BJ (cell line): ENCODE measurements at regions of chr11 and their contacts with region 1.

Region 1: GRCh38 chr11:7278314-7278917 is 26.7 kb downstream of the SYT9 start:
- DNase-seq: no peak
- H3K4me3 ChIP-seq: no peak overlapping the region
- H3K27me3 ChIP-seq: peaks cover 2% of the 10 kb centered on the region; the same call in 1 of the 2 replicates
- CTCF ChIP-seq: peak; percentile 77

Region 2: GRCh38 chr11:6812390-6813005 is 465.9 kb before region 1 on chr11:
- CTCF ChIA-PET with region 1: interaction called, 14 read pairs
- POLR2A ChIA-PET with region 1: no interaction called
- DNase-seq: no peak
- H3K4me3 ChIP-seq: no peak overlapping the region
- H3K27me3 ChIP-seq: no peaks in the 10 kb centered on the region
- CTCF ChIP-seq: peak; percentile 96

Region 3: DNA sequence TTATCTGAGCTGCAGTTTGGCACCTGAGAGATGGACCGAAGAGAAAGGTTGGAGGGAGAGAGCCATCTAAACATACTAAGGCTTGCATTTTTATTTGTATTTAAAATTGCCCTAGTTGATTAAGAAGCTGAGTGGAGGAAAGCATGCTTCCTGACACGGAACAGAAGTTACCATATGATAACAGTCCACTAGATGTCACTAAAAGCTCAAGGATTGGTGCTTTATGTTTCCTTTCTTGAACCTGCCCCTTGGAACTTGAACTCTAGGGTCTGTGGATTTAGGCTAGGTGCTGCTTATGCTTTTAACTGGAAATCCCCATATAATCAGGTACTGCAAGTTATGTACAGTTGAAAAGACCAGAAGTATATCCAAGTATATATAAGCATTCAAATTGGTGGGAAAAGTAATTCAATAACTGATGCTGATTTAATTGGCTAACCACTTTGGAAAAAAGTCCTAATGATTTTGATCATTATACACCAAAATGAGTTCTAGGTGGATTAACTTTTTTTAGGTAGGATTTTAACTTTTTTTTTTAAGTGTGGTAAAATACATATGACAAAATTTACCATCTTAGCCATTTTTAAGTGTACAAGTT is 180.1 kb before region 1 on chr11:
- CTCF ChIA-PET with region 1: interaction called, 16 read pairs
- POLR2A ChIA-PET with region 1: no interaction called
- DNase-seq: no peak
- H3K4me3 ChIP-seq: no peak overlapping the region
- H3K27me3 ChIP-seq: no peaks in the 10 kb centered on the region
- CTCF ChIP-seq: peak; percentile 62

Region 4: GRCh38 chr11:7143908-7144307 is 134.5 kb before region 1 on chr11:
- CTCF ChIA-PET with region 1: interaction called, 17 read pairs
- POLR2A ChIA-PET with region 1: no interaction called
- DNase-seq: no peak
- H3K4me3 ChIP-seq: no peak overlapping the region
- H3K27me3 ChIP-seq: no peaks in the 10 kb centered on the region
- CTCF ChIP-seq: peak; percentile 29; the same call in 1 of the 2 replicates

Region 5: GRCh38 chr11:7291100-7291829 is 12.8 kb after region 1 on chr11:
- CTCF ChIA-PET with region 1: interaction called, 15 read pairs
- POLR2A ChIA-PET with region 1: no interaction called
- DNase-seq: no peak
- H3K4me3 ChIP-seq: no peak overlapping the region
- H3K27me3 ChIP-seq: no peaks in the 10 kb centered on the region; the same call in 1 of the 2 replicates
- CTCF ChIP-seq: no peak

Region 6: DNA sequence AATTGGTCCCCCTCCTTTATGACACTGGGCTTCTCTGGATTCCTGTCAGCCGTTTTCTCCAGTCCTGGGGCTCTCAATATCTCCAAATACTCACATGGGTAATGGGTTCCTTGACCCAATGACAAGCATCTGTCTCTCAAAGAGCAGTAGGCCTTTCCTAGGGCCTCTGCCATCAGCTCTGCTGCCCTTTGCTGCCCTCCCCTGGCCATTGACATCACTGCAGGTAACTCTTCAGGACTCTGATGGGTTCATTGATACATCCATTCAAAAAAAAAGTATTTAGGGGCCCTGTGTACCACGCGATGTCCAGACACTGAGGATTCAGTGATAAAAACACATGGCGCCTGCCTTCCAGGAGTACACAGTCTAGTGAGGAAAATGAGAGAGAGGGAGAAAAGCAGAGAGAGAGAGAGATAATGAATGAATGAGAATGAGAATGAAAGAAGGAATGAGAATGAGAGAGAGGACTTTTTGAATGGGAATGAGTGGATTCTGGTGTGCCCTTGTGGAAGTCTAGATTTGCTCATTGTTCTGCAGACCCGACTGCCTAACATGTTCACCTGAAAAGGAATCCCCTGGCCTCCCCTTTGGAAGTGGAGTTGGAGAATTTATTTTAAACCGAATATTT is 164.3 kb after region 1 on chr11:
- CTCF ChIA-PET with region 1: interaction called, 11 read pairs
- POLR2A ChIA-PET with region 1: no interaction called
- DNase-seq: no peak
- H3K4me3 ChIP-seq: no peak overlapping the region
- H3K27me3 ChIP-seq: peaks cover 8% of the 10 kb centered on the region
- CTCF ChIP-seq: peak; percentile 91